ENCODE measurements at regions of chr1 and their contacts with region 1.

Region 1: DNA sequence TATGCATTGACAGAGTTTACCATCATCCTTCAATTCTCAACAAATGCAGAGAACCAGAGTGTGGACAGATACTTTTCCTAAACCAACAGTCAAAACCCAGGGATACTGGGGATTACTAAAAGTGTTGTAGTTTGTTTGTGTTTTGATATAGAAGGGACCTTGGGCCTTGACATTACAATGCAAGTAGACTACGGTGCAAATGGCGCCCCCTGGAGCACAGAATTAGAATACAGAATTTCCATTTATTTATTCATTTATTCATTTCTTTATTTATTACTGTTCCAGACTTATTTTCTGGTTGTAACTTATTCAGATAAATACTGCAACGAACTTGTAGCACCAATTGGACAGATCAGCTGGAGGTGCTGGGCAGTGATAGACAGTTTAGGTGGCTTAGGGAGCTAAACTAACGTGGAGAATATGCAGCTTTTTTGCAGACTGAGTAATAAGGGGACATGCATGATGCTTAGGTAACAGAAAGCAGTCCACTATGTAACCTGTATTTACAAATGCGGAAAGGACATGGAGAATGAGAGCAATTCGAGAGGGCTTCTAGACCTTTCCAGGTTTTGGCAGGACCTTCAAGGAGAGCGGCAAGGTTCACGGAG is 42.6 kb downstream of the KIRREL1 start:
- DNase-seq: peak; percentile 78
- H3K4me3 ChIP-seq: no peak overlapping the region
- H3K27ac ChIP-seq: no peak overlapping the region
- H3K4me1 ChIP-seq: peaks cover 34% of the 10 kb centered on the region
- H3K27me3 ChIP-seq: no peaks in the 10 kb centered on the region
- CTCF ChIP-seq: peak; percentile 59 to 67
- POLR2A ChIP-seq: no peak

Region 2: DNA sequence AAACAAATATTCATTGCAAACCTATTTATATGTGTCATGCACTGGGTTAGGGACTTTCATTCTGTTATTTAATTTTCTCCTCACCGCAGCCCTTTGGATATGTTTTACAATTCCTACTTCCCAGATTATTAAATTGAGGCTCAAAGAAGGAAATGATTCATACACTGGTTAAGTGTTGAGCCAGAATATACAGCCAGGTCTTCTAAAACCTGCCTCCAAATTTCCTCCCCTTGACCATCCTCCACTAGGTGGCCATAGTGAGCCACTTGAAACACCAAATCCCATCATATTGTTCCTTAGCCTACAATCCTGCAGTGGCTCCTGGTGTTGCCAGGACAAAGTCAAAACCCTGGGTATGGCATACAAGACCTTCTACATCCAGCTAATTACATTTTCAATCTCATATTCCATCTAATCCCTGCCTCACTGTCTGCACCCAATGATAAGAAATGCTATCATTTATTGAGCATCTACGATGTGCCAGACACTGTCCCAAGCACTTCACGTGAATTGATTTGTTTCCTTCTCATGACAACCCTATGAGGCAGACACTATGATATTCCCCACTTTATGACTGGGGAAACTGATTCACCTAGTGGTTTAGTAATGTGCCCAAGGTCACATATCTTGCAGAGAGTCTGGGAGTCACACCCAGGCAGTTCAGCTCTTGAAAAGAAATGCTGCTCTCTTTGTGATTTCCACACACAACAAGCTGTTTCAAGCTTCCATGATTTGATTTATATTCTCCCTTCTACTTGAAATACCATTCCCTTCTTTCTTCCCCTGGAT is 66.2 kb before region 1 on chr1:
- CTCF ChIA-PET with region 1: interaction called, 5 read pairs
- POLR2A ChIA-PET with region 1: no interaction called
- dilution Hi-C with region 1: no loop called
- intact Hi-C with region 1: loop called (anchors 2 kb)
- DNase-seq: peak; percentile 90
- H3K4me3 ChIP-seq: no peak overlapping the region
- H3K27ac ChIP-seq: peak overlapping the region; percentile 10
- H3K4me1 ChIP-seq: peaks cover 17% of the 10 kb centered on the region
- H3K27me3 ChIP-seq: peaks cover 2 to 4% of the 10 kb centered on the region in 2 experiments
- CTCF ChIP-seq: peak; percentile 75 to 90
- POLR2A ChIP-seq: no peak

Region 3: GRCh38 chr1:158007667-158008386 is 28.3 kb before region 1 on chr1:
- CTCF ChIA-PET with region 1: interaction called, 37 read pairs
- POLR2A ChIA-PET with region 1: interaction called, 12 read pairs
- dilution Hi-C with region 1: no loop called
- intact Hi-C with region 1: no loop called
- DNase-seq: peak; percentile 36
- H3K4me3 ChIP-seq: no peak overlapping the region
- H3K27ac ChIP-seq: peak overlapping the region; percentile 87
- H3K4me1 ChIP-seq: peaks cover 60% of the 10 kb centered on the region
- H3K27me3 ChIP-seq: no peaks in the 10 kb centered on the region
- CTCF ChIP-seq: no peak
- POLR2A ChIP-seq: no peak

Region 4: DNA sequence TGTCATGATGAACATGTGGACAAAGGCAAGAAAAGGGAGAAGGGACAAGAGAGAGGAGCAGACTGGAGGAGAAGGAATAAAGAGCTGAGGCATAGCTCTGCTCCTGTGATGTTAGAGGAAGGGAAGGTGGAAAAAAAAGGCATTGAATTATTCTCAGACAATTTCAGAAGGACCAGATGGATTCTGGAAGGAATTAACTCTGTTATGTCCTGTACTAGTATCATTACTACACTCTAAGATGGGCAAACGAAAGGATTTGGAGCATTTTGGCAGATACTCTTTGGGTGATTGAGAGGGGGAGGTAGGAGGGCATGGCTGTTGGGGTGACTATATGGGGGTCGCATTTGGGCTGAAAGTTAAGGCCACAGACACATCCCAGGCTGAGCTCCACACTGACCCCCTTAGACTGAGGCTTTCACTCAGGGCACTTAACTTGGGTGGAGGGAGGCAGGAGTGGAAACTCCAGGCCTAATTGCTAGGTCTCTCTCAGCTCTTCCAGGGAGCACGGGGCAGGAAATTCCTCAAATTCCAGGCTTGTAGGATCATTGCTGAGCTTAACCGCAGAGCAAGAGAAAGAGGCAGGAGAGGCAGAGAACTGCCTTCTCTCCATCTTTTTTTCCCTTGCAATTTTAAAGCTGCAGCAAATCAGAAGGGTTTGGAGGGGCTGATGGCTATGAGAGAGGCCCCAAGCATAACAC is 16.8 kb before region 1 on chr1:
- CTCF ChIA-PET with region 1: interaction called, 24 read pairs
- POLR2A ChIA-PET with region 1: interaction called, 5 read pairs
- dilution Hi-C with region 1: no loop called
- intact Hi-C with region 1: loop called (anchors 1 kb)
- DNase-seq: peak; percentile 87
- H3K4me3 ChIP-seq: peak overlapping the region in 1 of 3 experiments; percentile 2
- H3K27ac ChIP-seq: peak overlapping the region; percentile 95
- H3K4me1 ChIP-seq: peaks cover 49% of the 10 kb centered on the region
- H3K27me3 ChIP-seq: no peaks in the 10 kb centered on the region
- CTCF ChIP-seq: no peak
- POLR2A ChIP-seq: peak; percentile 38

Region 5: DNA sequence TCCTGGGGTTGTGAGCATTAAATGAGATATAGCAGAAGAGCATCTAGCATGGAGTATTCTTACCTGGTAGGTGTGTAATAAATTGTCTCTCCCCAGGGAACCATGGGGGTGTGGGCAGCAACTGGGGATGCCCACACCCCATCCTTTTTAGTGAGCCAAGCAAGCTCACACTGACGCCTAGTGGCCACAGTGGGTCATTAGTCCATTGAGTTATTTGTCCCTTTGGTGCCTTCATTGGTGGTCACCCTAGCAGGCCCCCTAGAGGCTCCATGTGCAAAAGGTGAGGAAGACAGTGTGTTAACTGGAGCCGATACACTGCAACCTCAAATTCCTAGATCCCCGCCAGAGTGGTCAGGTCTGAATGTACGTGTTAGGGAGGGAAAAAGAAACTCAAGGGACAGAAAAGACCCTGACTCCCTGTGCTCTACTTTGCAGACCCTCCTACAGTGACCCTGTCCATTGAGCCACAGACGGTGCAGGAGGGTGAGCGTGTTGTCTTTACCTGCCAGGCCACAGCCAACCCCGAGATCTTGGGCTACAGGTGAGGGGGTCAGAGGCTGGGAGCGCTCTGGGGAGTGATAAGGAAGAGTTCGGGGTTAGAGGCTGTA is 51.3 kb after region 1 on chr1:
- CTCF ChIA-PET with region 1: interaction called, 22 read pairs
- POLR2A ChIA-PET with region 1: no interaction called
- dilution Hi-C with region 1: no loop called
- intact Hi-C with region 1: loop called (anchors 1 kb)
- DNase-seq: peak; percentile 83
- H3K4me3 ChIP-seq: no peak overlapping the region
- H3K27ac ChIP-seq: no peak overlapping the region
- H3K4me1 ChIP-seq: no peaks in the 10 kb centered on the region
- H3K27me3 ChIP-seq: no peaks in the 10 kb centered on the region
- CTCF ChIP-seq: peak; percentile 96 to 99
- POLR2A ChIP-seq: no peak

Measured in endothelial cell of umbilical vein (primary cell).